A549 (cell line): ENCODE measurements at regions of chr1 and their contacts with region 1.

Region 1: DNA sequence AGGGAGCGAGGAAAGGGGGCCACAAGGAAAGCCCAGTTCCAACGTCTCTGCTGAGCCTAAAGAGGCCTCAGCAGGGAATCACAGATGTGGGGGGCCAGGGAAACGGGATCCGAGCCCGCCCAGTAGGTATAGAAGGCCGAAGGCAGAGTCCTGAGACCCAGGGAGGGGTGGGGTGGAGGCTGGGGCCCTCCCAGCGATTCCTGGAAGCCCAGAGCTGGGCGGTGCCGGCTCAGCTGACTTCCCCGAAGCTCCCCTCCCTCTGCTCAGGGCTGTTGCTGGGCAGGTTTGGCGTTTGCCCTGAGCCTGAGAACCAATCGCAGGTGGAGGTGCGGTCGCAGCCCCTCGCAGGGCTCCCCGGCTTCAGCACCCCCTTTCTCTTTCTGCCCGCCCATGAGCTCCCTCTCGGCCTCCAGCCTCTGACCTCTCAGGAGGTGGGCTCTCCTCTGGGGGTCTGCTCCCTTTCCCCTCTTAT is 12.8 kb downstream of the ADAMTSL4 start:
- DNase-seq: peak; percentile 86 to 89
- ATAC-seq: peak; percentile 62 to 72
- H3K4me3 ChIP-seq: peak overlapping the region; percentile 46
- H3K27ac ChIP-seq: peak overlapping the region; percentile 97 to 99
- H3K4me1 ChIP-seq: peaks cover 54% of the 10 kb centered on the region
- CTCF ChIP-seq: no peak
- EP300 ChIP-seq: peak in 1 of 2 experiments; percentile 44; a peak in 1 of 5 replicates
- POLR2A ChIP-seq: peak; percentile 30
- RAD21 ChIP-seq: no peak

Region 2: GRCh38 chr1:150106341-150106740 is 455.7 kb before region 1 on chr1:
- CTCF ChIA-PET with region 1: no interaction called
- POLR2A ChIA-PET with region 1: no interaction called
- DNase-seq: no peak
- ATAC-seq: no peak
- H3K4me3 ChIP-seq: no peak overlapping the region
- H3K27ac ChIP-seq: no peak overlapping the region
- H3K4me1 ChIP-seq: no peaks in the 10 kb centered on the region
- CTCF ChIP-seq: no peak
- EP300 ChIP-seq: no peak
- POLR2A ChIP-seq: no peak
- RAD21 ChIP-seq: no peak

Region 3: DNA sequence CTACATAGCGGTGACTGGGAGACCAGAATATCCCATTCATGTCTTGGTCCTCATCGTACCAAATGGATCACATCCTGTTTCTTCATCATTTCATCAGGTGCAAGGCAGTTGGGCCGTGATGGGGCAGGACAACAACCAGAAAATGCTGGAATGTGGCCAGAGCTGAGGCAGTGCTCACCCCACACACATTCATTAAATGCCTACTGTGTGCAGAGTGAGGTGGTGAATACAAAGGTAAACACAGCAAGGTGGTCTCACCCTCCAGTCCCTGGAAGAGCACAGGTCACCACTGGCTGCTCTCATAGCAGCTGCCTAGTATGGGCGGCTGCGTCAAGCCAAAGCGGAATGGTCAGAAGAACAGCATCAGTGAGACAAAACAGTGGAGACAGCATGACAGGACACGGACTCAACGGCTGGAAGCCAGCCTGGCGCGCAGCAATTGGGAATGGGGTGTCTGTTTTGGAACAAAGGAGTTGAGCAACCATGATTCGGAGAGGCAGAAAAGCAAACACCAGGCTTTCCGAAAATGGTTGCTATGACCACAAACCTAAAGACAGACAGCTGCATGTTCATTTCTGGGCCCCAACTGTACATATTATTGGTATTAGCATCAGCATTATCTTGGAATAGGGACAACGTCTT is 18.4 kb before region 1 on chr1:
- CTCF ChIA-PET with region 1: interaction called, 102 read pairs
- POLR2A ChIA-PET with region 1: no interaction called
- DNase-seq: no peak
- ATAC-seq: 0 out of 6 replicates have a peak, but pooled peaks of 1 of the 2 experiments have one; percentile 22
- H3K4me3 ChIP-seq: no peak overlapping the region
- H3K27ac ChIP-seq: no peak overlapping the region
- H3K4me1 ChIP-seq: no peaks in the 10 kb centered on the region; the same call in 2 of the 3 replicates
- CTCF ChIP-seq: no peak
- EP300 ChIP-seq: no peak
- POLR2A ChIP-seq: no peak
- RAD21 ChIP-seq: no peak

Region 4: GRCh38 chr1:150578965-150579798 is 17.2 kb after region 1 on chr1 and contains the start of gene MCL1:
- CTCF ChIA-PET with region 1: interaction called, 140 read pairs
- POLR2A ChIA-PET with region 1: interaction called, 201 read pairs
- DNase-seq: peak; percentile 84 to 96
- ATAC-seq: peak; percentile 90 to 94
- H3K4me3 ChIP-seq: peak within 1 kb of the TSS; percentile 91
- H3K27ac ChIP-seq: peak within 1 kb of the TSS; percentile 98
- H3K4me1 ChIP-seq: peaks cover 31% of the 10 kb centered on the region
- CTCF ChIP-seq: no peak
- EP300 ChIP-seq: peak in 1 of 2 experiments; percentile 9; a peak in 1 of 5 replicates
- POLR2A ChIP-seq: peak; percentile 87
- RAD21 ChIP-seq: no peak; a peak in 1 of 5 replicates
- polyA plus RNA-seq, gene MCL1: 145 and 202 TPM in 2 replicates

Region 5: DNA sequence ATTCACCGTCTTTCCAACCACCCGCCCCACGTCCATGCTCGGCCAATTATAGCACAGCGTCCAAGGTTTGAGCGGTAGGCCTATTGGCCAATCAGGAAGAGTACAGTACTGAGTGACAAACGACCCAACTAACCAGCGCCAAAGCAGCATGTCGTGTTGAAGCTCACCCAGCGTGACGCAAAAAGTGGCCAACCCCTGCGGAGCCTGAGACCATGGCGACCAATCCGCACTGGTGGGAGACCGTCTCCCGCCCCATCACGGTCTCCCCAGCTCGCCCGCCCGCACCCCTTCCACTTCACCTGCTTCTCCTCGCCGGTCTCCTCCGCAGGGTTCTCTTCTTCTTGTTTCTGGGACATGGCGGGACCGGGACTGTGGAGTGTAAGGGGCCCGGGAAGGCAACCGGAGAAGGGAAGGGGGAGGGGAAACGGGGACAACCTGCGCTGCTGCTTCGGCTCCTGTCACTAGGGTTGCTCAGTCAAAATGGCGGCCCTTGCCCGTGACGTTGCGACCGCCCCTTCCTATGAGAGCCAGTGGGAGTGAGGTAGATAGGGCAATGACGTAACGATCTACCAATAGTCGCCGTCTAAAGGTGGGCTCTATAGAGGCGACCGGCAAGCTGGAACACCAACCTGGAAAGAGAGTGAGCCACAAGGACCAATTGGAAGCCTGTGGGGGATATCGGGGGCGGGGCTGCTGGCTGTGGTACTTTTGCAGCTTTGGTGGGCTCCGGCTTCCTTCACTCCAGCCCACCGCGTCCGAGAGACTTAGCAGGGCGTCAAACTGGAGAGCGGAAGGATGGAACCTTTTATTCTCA is 67.3 kb after region 1 on chr1 and contains the start of gene ENSA:
- CTCF ChIA-PET with region 1: interaction called, 210 read pairs
- POLR2A ChIA-PET with region 1: interaction called, 22 read pairs
- DNase-seq: peak; percentile 99
- ATAC-seq: peak; percentile 96 to 97
- H3K4me3 ChIP-seq: peak within 1 kb of the TSS; percentile 62
- H3K27ac ChIP-seq: peak within 1 kb of the TSS; percentile 85 to 95
- H3K4me1 ChIP-seq: peaks cover 13% of the 10 kb centered on the region; the same call in 2 of the 3 replicates
- CTCF ChIP-seq: no peak
- EP300 ChIP-seq: no peak
- POLR2A ChIP-seq: peak; percentile 58
- RAD21 ChIP-seq: no peak
- polyA plus RNA-seq, gene ENSA: 61.2 and 67.9 TPM in 2 replicates

Region 6: GRCh38 chr1:150813058-150813707 is 251.2 kb after region 1 on chr1:
- CTCF ChIA-PET with region 1: interaction called, 36 read pairs
- POLR2A ChIA-PET with region 1: interaction called, 4 read pairs
- DNase-seq: peak; percentile 69 to 75
- ATAC-seq: peak; percentile 97 to 98
- H3K4me3 ChIP-seq: no peak overlapping the region
- H3K27ac ChIP-seq: no peak overlapping the region
- H3K4me1 ChIP-seq: no peaks in the 10 kb centered on the region
- CTCF ChIP-seq: peak; percentile 76
- EP300 ChIP-seq: no peak
- POLR2A ChIP-seq: no peak
- RAD21 ChIP-seq: peak; percentile 84 to 90